Ascending aorta (tissue), 2 donors: ENCODE measurements at regions of chr19 and their contacts with region 1.

Region 1: DNA sequence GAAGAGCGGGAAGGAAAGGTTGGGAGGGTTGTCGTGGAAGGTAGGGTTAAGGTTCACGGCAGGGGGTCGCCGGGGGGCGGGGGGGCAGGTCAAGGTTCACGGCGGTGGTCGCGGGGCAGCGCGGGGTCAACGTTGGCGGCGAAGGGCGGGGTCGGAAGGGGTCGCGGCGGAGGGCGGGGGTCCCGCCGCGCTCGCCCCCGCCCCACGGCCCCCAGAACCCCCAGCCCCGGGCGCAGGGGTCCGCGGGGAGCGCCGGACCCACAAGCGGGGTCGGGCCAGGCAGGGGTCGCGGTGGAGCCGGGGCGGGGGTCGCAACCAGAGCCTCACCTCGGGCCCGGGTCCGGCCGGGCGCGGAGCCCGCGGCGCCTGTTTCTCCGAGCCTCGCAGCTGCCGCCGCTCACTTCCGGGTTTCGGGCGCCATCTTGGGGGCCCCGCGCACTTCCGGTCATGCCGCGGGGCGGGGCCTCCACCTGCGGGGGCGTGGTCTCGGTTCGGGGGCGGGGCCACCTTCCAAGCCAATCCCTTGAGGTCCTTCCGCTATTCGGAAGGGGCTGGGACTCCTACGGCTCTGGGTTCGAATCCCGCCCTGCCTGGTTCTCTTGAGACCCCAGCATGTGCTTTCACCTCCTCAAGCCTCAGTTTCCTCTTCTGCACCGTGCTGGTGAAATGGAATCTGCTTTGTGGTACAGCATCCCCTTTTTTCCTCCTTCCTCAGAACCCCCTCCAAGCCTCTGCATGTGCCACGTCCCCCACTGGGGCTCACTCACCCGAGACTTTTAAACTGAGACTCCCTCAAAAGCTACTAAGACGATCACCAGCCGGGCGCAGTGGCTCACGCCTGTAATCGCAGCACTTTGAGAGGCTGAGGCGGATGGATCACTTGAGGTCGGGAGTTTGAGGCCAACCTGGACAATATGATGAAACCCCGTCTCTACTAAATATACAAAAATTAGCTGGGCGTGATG is at the start of gene SBNO2:
- DNase-seq: peak in 1 of 2 donors; percentile 93
- H3K4me3 ChIP-seq: peak within 1 kb of the TSS; percentile 87 to 93
- H3K27ac ChIP-seq: peak within 1 kb of the TSS; percentile 93 to 94
- H3K4me1 ChIP-seq: peaks cover 0 to 15% of the 10 kb centered on the region in 2 donors
- H3K27me3 ChIP-seq: no peaks in the 10 kb centered on the region
- CTCF ChIP-seq: no peak
- total RNA-seq, gene SBNO2: 120 TPM

Region 2: DNA sequence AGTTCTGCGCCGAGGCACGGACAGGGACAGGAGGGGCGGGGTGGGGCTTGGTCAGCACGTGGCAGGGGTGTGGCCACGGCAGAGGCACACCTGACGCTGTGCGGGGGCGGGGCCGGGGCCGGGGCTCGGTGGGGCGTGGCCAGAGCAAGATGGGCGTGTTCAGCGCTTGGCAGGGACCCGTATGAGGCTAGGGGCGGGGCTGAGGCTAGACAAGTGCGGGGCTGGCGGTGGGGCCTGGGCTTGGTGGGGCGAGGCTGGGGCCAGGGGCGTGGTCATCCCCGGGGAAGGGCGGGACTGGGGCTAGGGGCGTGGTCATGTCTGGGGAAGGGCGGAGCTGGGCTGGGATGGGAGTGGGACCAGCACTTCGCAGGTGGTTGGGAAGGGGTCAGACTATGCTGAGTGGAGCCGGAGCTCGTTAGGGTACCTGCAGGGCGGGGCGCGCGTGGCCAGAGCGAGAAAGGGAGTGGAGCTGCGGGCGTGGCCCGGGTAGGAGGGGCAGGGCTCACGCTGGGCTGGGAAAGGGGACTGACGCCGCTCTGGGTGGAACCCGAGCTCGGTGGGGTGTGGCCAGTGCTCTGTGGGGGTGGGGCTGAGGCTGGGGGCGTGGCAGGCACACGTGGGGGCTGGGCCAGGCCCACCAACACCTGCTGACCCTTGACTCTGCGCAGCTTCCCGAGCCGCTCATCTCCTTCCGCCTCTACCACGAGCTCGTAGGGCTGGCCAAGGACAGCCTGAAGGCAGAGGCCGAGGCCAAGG is 91.8 kb before region 1 on chr19:
- intact Hi-C with region 1: no loop called
- DNase-seq: no peak
- H3K4me3 ChIP-seq: no peak overlapping the region
- H3K27ac ChIP-seq: no peak overlapping the region
- H3K4me1 ChIP-seq: no peaks in the 10 kb centered on the region
- H3K27me3 ChIP-seq: no peaks in the 10 kb centered on the region
- CTCF ChIP-seq: no peak

Region 3: GRCh38 chr19:1122972-1123363 is 51.2 kb before region 1 on chr19:
- intact Hi-C with region 1: no loop called
- DNase-seq: no peak
- H3K4me3 ChIP-seq: no peak overlapping the region
- H3K27ac ChIP-seq: peak overlapping the region in 1 of 2 donors; percentile 33
- H3K4me1 ChIP-seq: peaks cover 0 to 13% of the 10 kb centered on the region in 2 donors
- H3K27me3 ChIP-seq: no peaks in the 10 kb centered on the region
- CTCF ChIP-seq: no peak

Region 4: GRCh38 chr19:1154731-1155351 is 19.3 kb before region 1 on chr19:
- intact Hi-C with region 1: loop called (anchors 1 kb)
- DNase-seq: peak; percentile 76 to 95
- H3K4me3 ChIP-seq: peak overlapping the region; percentile 34 to 45
- H3K27ac ChIP-seq: peak overlapping the region; percentile 89 to 95
- H3K4me1 ChIP-seq: peaks cover 17 to 42% of the 10 kb centered on the region in 2 donors
- H3K27me3 ChIP-seq: no peaks in the 10 kb centered on the region
- CTCF ChIP-seq: no peak